Mucosa of descending colon (tissue), 3 donors: ENCODE measurements at regions of chr15 and their contacts with region 1.

Region 1: GRCh38 chr15:77024271-77025082 is 29.6 kb downstream of the PSTPIP1 start:
- DNase-seq: peak; percentile 64 to 83 (median 82)
- ATAC-seq: peak; percentile 69
- H3K4me3 ChIP-seq: no peak overlapping the region
- H3K4me1 ChIP-seq: peaks cover 15% of the 10 kb centered on the region
- CTCF ChIP-seq: peak; percentile 87

Region 2: GRCh38 chr15:76863693-76864092 is 160.8 kb before region 1 on chr15:
- intact Hi-C with region 1: no loop called
- DNase-seq: no peak
- ATAC-seq: no peak
- H3K4me3 ChIP-seq: no peak overlapping the region
- H3K4me1 ChIP-seq: no peaks in the 10 kb centered on the region
- CTCF ChIP-seq: no peak

Region 3: GRCh38 chr15:76931397-76932007 is 93.0 kb before region 1 on chr15 and contains the start of gene RCN2:
- intact Hi-C with region 1: no loop called
- DNase-seq: peak; percentile 93 to 98 (median 96)
- ATAC-seq: peak; percentile 99
- H3K4me3 ChIP-seq: peak within 1 kb of the TSS; percentile 73
- H3K4me1 ChIP-seq: peaks cover 11% of the 10 kb centered on the region
- CTCF ChIP-seq: no peak
- total RNA-seq, gene RCN2: 25.0 to 33.2 (median 31.9) TPM

Region 4: GRCh38 chr15:77543159-77543882 is 518.8 kb after region 1 on chr15:
- intact Hi-C with region 1: loop called in 1 of 2 experiments (anchors 10 kb)
- DNase-seq: peak; percentile 86 to 92 (median 90)
- ATAC-seq: peak; percentile 91
- H3K4me3 ChIP-seq: no peak overlapping the region
- H3K4me1 ChIP-seq: peaks cover 15% of the 10 kb centered on the region
- CTCF ChIP-seq: peak; percentile 86